Body of pancreas (tissue), 4 donors: ENCODE measurements at regions of chr2 and their contacts with region 1.

Region 1: GRCh38 chr2:100984892-100985379 is 17.2 kb upstream of the RPL31 start:
- DNase-seq: peak; percentile 81 to 87 (median 82)
- ATAC-seq: peak; percentile 77
- H3K4me3 ChIP-seq: no peak overlapping the region
- H3K27ac ChIP-seq: no peak overlapping the region
- H3K4me1 ChIP-seq: no peaks in the 10 kb centered on the region
- H3K27me3 ChIP-seq: no peaks in the 10 kb centered on the region
- CTCF ChIP-seq: peak; percentile 66 to 96 (median 86)
- POLR2A ChIP-seq: no peak

Region 2: DNA sequence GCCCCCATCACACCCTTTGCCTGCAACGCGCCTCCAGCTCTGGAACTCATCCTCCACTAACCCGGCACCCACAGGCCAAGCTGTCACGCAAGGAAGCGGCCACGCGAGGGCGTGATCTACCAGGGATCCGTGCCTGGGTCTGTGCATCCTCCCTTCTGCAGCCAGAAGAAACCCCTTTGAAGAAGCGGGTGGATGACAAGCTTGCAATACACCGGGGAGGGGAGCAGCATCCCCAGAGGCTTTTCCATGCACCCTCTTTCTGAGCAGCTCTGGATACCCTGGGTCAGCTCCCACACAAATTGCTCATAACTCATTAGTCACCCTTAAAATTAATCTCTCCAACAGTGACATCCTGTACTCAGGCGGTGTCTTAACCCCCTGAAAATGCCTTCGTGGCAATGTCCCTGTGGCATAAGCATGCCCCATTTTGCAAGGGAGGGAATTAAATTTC is 374.5 kb before region 1 on chr2:
- intact Hi-C with region 1: loop called (anchors 5 kb)
- DNase-seq: peak; percentile 56 to 72 (median 66)
- ATAC-seq: peak; percentile 65
- H3K4me3 ChIP-seq: no peak overlapping the region
- H3K27ac ChIP-seq: no peak overlapping the region
- H3K4me1 ChIP-seq: no peaks in the 10 kb centered on the region
- H3K27me3 ChIP-seq: no peaks in the 10 kb centered on the region
- CTCF ChIP-seq: peak in 6 of 7 experiments; percentile 33 to 65 (median 55)
- POLR2A ChIP-seq: no peak

Region 3: DNA sequence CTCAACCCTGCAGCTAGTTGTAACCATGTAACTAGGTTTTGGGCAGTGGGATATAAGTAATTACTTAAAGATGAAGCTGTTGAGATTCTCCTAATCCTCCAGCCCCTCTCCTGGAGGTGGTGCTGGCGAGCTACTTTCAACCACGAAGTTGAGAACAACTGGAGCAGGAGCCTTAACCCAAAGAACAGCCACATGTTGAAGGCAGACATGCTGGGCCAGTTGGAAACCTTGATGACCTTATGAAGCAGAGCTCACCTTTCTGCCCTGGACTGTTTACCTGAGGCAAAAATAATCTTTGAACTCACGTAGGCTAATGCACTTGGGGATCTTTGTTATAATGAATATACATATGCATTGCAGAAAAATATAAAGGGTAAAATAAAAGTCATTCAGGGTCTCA is 254.6 kb before region 1 on chr2:
- intact Hi-C with region 1: loop called (anchors 5 kb)
- DNase-seq: peak; percentile 60 to 75 (median 73)
- ATAC-seq: peak; percentile 82
- H3K4me3 ChIP-seq: no peak overlapping the region
- H3K27ac ChIP-seq: no peak overlapping the region
- H3K4me1 ChIP-seq: no peaks in the 10 kb centered on the region
- H3K27me3 ChIP-seq: no peaks in the 10 kb centered on the region
- CTCF ChIP-seq: peak; percentile 40 to 76 (median 67)
- POLR2A ChIP-seq: no peak

Region 4: GRCh38 chr2:100941646-100942240 is 43.2 kb before region 1 on chr2:
- intact Hi-C with region 1: loop called (anchors 5 kb)
- DNase-seq: no peak
- ATAC-seq: no peak
- H3K4me3 ChIP-seq: no peak overlapping the region
- H3K27ac ChIP-seq: no peak overlapping the region
- H3K4me1 ChIP-seq: peaks cover 18% of the 10 kb centered on the region
- H3K27me3 ChIP-seq: no peaks in the 10 kb centered on the region
- CTCF ChIP-seq: no peak
- POLR2A ChIP-seq: no peak